Activated T-helper 2 cell treated with anti-CD3 and anti-CD28 coated beads, Interferon-gamma antibody, Interleukin-2, Interleukin-4, amounts not matched to agents 10 μg/mL and 5 μg/mL and 100 μg/mL, durations not matched to agents 14 hours and 24 hours and 36 hours (primary cell): ENCODE measurements at regions of chr17 and their contacts with region 1.

Region 1: GRCh38 chr17:48457080-48457836 is 27.2 kb upstream of the SKAP1 start:
- DNase-seq: peak; percentile 68
- H3K4me3 Mint-ChIP-seq: peak overlapping the region; percentile 28
- H3K27ac Mint-ChIP-seq: no peak overlapping the region
- H3K4me1 Mint-ChIP-seq: peaks cover 62% of the 10 kb centered on the region
- H3K27me3 Mint-ChIP-seq: no peaks in the 10 kb centered on the region

Region 2: DNA sequence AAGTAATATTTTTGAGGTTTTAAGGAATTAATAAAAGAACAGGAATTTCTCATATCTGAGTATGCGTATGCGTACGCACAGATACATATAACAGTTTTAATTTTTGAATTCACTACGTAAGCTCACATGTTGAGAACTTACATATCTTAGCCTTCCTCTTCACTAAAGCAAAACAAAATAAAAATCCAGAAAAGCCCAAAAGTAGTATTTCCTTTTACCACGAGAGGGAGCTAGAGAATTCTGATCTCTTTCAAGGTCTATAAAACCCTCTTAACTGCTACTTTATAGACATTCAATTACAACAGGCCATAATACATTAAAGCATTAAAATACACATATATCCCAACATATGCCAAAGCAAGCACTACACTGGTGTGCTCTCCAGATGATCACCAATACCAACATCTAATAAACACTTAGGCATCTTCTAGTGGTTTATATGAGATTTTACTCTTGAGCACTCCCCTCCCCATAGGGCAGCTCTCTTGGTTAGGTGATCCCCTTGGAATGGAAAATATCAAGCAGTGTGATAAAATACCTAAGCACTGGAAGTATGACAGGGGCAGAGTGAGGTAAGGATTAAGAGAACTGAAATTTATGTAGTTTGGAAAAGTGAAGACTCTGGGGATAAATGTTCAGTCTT is 121.3 kb before region 1 on chr17:
- intact Hi-C with region 1: loop called (anchors 5 kb)
- DNase-seq: no peak
- H3K4me3 Mint-ChIP-seq: no peak overlapping the region
- H3K27ac Mint-ChIP-seq: no peak overlapping the region
- H3K4me1 Mint-ChIP-seq: peaks cover 23% of the 10 kb centered on the region
- H3K27me3 Mint-ChIP-seq: no peaks in the 10 kb centered on the region

Region 3: GRCh38 chr17:48351831-48352332 is 105.4 kb before region 1 on chr17:
- intact Hi-C with region 1: loop called (anchors 1 kb)
- DNase-seq: no peak
- H3K4me3 Mint-ChIP-seq: no peak overlapping the region
- H3K27ac Mint-ChIP-seq: no peak overlapping the region
- H3K4me1 Mint-ChIP-seq: peaks cover 8% of the 10 kb centered on the region
- H3K27me3 Mint-ChIP-seq: no peaks in the 10 kb centered on the region

Region 4: DNA sequence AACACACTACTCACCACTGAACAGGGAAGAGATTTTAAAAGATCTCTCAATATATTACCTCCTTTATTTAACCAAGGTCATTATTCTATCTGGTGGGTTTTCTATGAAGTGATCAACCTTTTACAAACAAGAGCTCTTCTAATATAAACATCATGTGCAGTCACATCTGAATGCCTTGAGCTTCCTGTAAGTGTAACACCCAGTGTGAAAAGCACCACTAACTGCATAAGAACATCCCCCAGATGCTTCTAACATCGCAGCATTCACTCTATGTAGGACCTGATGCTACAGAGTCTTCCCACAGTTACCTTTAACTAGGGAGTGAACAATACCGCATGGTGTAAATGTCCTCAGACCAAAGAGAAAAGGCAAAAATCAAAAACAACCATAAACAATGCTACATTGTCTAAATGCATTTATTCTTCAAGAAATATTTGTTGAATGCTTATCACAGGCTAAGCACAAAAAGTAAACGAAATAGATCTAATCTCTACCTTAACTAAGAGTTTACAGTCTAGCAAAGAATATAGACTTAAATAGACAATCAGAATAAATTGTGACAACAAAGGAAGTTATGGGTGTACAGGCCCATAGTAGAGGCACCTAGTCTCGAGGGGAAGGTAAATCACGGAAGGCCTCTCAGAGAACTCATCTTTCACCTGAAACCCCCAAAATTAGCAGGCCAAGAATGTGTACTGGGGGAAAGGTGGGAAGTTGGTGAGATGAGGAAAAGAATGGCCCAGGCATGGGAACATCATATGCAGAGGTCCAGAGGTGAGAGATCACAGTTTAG is 43.4 kb before region 1 on chr17:
- intact Hi-C with region 1: loop called (anchors 1 kb)
- DNase-seq: no peak
- H3K4me3 Mint-ChIP-seq: peak overlapping the region; percentile 19
- H3K27ac Mint-ChIP-seq: peak overlapping the region; percentile 86
- H3K4me1 Mint-ChIP-seq: peaks cover 66% of the 10 kb centered on the region
- H3K27me3 Mint-ChIP-seq: no peaks in the 10 kb centered on the region

Region 5: GRCh38 chr17:48429638-48430586 is 27.3 kb before region 1 on chr17 and contains the start of gene SKAP1:
- intact Hi-C with region 1: loop called (anchors 2 kb)
- DNase-seq: peak; percentile 68
- H3K4me3 Mint-ChIP-seq: peak within 1 kb of the TSS; percentile 97
- H3K27ac Mint-ChIP-seq: peak within 1 kb of the TSS; percentile 93
- H3K4me1 Mint-ChIP-seq: peaks cover 65% of the 10 kb centered on the region
- H3K27me3 Mint-ChIP-seq: no peaks in the 10 kb centered on the region
- total RNA-seq, gene SKAP1: 60.5 and 67.9 TPM in 2 replicates

Region 6: DNA sequence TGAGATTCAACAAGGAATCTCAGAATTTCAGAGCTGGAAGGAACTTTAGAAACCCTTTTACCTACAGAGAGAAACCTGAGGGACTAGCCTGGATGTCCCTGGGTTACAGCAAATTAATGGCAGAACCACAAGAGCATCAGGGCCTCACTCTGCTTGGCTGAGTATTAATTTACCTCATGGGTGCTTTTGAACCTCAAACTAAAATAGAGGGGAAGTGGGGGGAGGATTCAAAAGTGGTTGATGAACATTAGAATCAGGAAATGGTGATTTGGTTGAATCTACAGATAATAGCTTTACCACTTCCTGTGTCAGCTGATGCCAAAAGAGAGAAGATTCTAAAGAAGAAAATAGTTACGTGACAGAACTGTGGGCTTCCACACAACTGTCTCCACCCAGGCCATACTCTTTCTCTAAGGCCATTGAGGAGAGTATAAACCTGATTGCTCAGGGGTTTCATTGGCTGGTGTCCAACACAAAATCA is 16.0 kb before region 1 on chr17:
- intact Hi-C with region 1: loop called (anchors 1 kb)
- DNase-seq: peak; percentile 58
- H3K4me3 Mint-ChIP-seq: peak overlapping the region; percentile 24
- H3K27ac Mint-ChIP-seq: peak overlapping the region; percentile 79
- H3K4me1 Mint-ChIP-seq: peaks cover 82% of the 10 kb centered on the region
- H3K27me3 Mint-ChIP-seq: no peaks in the 10 kb centered on the region

Region 7: DNA sequence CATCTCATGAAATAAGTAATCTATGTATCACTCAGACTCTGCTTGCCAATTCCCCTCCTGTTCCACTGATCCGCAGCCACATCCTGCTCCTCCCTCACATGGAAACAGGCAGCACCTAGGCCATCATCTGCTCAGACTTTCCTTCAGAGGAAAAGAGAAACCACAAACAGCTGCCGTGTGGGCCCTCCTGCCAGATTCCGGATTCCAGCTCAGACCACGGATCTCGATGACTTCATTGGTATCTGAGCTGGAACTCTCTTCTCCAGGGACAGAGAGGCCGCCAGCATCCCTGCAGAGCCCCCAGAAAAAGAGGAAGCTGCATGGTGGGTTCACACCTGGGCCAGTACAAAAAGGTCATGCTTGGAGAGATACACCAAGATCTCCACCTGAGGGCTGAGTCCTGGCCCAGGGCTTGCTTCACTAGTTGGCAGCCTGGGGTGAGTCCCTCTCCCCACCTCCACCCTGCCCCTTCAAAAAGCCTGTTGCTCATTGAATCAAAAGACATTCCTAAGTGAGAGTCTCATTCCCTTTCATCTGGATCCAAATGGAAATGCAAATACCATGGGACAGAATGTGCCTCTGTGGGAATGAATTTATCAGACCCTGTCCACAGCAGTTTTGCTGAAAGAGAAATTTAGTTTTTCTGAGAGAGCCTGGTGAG is 26.3 kb after region 1 on chr17:
- intact Hi-C with region 1: loop called (anchors 2 kb)
- DNase-seq: peak; percentile 33
- H3K4me3 Mint-ChIP-seq: no peak overlapping the region
- H3K27ac Mint-ChIP-seq: peak overlapping the region; percentile 18
- H3K4me1 Mint-ChIP-seq: peaks cover 40% of the 10 kb centered on the region
- H3K27me3 Mint-ChIP-seq: no peaks in the 10 kb centered on the region

Region 8: GRCh38 chr17:48961516-48962233 is 504.4 kb after region 1 on chr17:
- intact Hi-C with region 1: no loop called
- DNase-seq: no peak
- H3K4me3 Mint-ChIP-seq: no peak overlapping the region
- H3K27ac Mint-ChIP-seq: no peak overlapping the region
- H3K4me1 Mint-ChIP-seq: no peaks in the 10 kb centered on the region
- H3K27me3 Mint-ChIP-seq: peaks cover 22% of the 10 kb centered on the region